ENCODE measurements at regions of chr11 and their contacts with region 1.

Region 1: GRCh38 chr11:116073854-116074837 is 569.9 kb upstream of the CADM1 start:
- DNase-seq: no peak
- H3K4me3 ChIP-seq: no peak overlapping the region
- H3K27ac ChIP-seq: no peak overlapping the region
- H3K4me1 ChIP-seq: peaks cover 0 to 9% (median 3%) of the 10 kb centered on the region in 4 experiments; a peak in 4 of 7 replicates
- H3K27me3 ChIP-seq: peaks cover 0 to 6% (median 0%) of the 10 kb centered on the region in 4 experiments; a peak in 1 of 7 replicates
- CTCF ChIP-seq: no peak
- EP300 ChIP-seq: no peak
- POLR2A ChIP-seq: no peak
- RAD21 ChIP-seq: no peak

Region 2: GRCh38 chr11:115889712-115890111 is 184.4 kb before region 1 on chr11:
- CTCF ChIA-PET with region 1: no interaction called
- POLR2A ChIA-PET with region 1: no interaction called
- DNase-seq: no peak
- H3K4me3 ChIP-seq: no peak overlapping the region
- H3K27ac ChIP-seq: no peak overlapping the region
- H3K4me1 ChIP-seq: peaks cover 0 to 3% (median 0%) of the 10 kb centered on the region in 4 experiments; a peak in 1 of 7 replicates
- H3K27me3 ChIP-seq: no peaks in the 10 kb centered on the region
- CTCF ChIP-seq: no peak
- EP300 ChIP-seq: no peak
- POLR2A ChIP-seq: no peak
- RAD21 ChIP-seq: no peak

Region 3: GRCh38 chr11:116035977-116036376 is 38.2 kb before region 1 on chr11:
- CTCF ChIA-PET with region 1: interaction called, 13 read pairs
- POLR2A ChIA-PET with region 1: no interaction called
- DNase-seq: no peak
- H3K4me3 ChIP-seq: no peak overlapping the region
- H3K27ac ChIP-seq: no peak overlapping the region
- H3K4me1 ChIP-seq: peaks cover 0 to 8% (median 3%) of the 10 kb centered on the region in 4 experiments; a peak in 5 of 7 replicates
- H3K27me3 ChIP-seq: no peaks in the 10 kb centered on the region
- CTCF ChIP-seq: no peak
- EP300 ChIP-seq: no peak
- POLR2A ChIP-seq: no peak
- RAD21 ChIP-seq: no peak

Region 4: DNA sequence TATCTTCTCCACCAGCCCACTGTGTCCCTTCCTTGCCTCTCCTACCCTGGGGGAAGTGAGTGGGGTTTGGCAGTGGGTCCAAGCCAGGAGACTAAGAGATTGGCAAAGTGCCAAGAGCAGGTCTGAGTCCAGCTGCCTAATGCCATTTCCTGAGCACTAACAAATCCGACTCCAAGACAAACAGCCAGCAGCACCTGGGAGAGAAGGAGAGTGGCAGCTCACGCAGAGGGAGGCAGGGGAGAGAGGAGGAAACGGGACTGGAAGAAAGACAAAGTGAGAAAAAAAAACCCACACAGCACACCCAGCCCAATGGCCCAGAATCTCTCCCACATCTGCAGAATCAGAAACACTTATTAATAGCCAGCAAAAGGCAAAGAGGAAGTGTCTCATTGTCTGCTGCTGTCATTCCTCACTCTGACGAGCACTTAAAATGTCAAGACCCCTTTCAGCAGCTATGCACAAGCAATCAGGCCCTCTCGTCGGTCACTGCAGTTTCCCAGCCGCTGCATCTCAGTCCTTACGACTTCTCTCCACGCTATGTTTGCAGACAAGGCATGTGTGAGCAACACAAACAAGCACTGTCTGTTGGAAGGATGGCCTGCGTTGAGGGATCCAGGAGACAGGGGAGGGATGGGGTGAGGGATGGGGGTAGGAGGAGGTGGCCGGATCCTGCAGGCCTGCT is 11.5 kb before region 1 on chr11:
- CTCF ChIA-PET with region 1: interaction called, 12 read pairs
- POLR2A ChIA-PET with region 1: no interaction called
- DNase-seq: no peak
- H3K4me3 ChIP-seq: no peak overlapping the region
- H3K27ac ChIP-seq: no peak overlapping the region
- H3K4me1 ChIP-seq: peaks cover 0 to 11% (median 5%) of the 10 kb centered on the region in 4 experiments; a peak in 4 of 7 replicates
- H3K27me3 ChIP-seq: peaks cover 0 to 7% (median 3%) of the 10 kb centered on the region in 4 experiments; a peak in 4 of 7 replicates
- CTCF ChIP-seq: no peak
- EP300 ChIP-seq: no peak
- POLR2A ChIP-seq: no peak
- RAD21 ChIP-seq: no peak

Region 5: GRCh38 chr11:116086426-116086825 is 12.3 kb after region 1 on chr11:
- CTCF ChIA-PET with region 1: interaction called, 15 read pairs
- POLR2A ChIA-PET with region 1: no interaction called
- DNase-seq: no peak
- H3K4me3 ChIP-seq: no peak overlapping the region
- H3K27ac ChIP-seq: no peak overlapping the region
- H3K4me1 ChIP-seq: peaks cover 0 to 9% (median 3%) of the 10 kb centered on the region in 4 experiments; a peak in 3 of 7 replicates
- H3K27me3 ChIP-seq: no peaks in the 10 kb centered on the region; a peak in 1 of 7 replicates
- CTCF ChIP-seq: no peak
- EP300 ChIP-seq: no peak
- POLR2A ChIP-seq: no peak
- RAD21 ChIP-seq: no peak

Region 6: DNA sequence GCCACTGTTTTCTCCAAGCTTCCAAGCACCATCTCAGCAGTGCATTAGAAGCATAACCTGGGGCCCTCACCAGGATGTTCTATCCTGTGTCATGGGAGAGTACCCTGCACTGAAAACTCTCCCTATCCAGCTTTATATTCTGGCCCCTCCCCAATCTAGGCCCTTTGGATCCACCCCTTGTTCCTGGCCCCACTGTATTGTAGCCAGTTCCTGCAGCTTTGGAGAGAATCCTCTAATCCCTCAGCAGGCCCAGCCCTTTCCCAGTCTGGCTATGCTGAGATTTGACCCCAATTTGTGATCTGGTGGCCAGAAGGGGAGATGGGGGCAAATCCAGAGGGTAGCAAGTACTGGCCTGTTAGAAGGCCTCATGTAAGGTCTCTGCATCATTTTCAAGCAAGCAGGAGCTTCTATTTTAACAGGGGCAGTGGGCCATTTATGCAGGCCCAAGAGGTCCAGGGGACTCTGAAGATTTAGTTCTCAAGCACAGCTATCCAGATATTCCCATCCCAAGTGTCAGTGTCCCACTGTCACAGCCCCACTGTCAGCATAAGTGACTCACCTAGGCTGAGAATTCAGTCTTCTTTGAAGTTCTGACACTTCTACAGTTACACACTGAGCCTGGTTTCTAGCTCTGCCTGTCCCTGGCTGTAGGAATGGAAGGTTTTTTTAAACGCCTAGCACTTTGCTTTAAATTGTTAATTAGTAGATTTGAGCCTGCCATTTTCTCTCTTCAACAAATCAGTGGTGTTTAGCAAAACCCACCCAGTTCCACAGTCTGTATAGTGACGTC is 19.5 kb after region 1 on chr11:
- CTCF ChIA-PET with region 1: interaction called, 10 read pairs
- POLR2A ChIA-PET with region 1: no interaction called
- DNase-seq: no peak
- H3K4me3 ChIP-seq: no peak overlapping the region
- H3K27ac ChIP-seq: no peak overlapping the region
- H3K4me1 ChIP-seq: peaks cover 0 to 3% (median 0%) of the 10 kb centered on the region in 4 experiments; a peak in 1 of 7 replicates
- H3K27me3 ChIP-seq: peaks cover 0 to 2% (median 1%) of the 10 kb centered on the region in 4 experiments; a peak in 2 of 7 replicates
- CTCF ChIP-seq: no peak
- EP300 ChIP-seq: no peak
- POLR2A ChIP-seq: no peak
- RAD21 ChIP-seq: no peak

Region 7: DNA sequence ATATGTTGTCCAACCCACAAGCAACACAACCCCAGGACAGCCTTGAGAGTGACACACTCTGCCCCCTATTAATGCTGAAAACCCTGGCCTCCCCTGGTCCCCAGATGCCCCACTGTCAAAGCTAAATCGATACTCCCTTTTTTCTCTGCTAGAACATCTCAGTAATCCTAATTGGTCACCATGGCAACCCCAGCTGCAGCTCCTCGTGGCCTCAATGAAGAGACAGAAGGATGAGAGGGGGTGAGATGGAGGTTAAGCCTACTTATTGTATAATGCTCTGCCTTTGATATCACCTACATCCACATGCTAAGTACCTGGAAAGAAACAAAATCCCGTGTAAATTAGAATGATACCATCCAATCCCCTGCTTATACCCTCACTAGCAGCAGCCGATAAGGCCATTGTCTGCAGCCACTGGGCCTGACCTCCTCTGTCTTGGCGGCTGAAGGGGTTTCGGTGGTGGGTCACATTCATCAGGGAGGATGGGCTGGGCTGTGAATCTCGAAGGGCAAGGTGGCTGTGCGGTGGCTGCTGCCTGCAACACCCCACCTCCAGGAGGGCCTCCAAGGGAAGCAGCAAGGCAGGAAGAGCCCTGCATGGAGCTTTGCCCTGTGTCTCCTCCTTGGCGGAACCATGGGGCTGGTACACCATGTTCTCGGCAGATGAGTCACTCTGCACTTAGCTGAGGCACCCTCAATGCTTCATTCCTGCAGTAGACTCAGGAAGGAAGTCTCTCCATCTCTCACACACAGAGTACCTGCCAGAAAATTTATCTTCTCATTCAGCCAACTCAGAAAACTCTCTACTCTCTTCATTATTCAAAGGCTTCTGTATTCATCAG is 299.2 kb after region 1 on chr11:
- CTCF ChIA-PET with region 1: no interaction called
- POLR2A ChIA-PET with region 1: no interaction called
- DNase-seq: no peak
- H3K4me3 ChIP-seq: no peak overlapping the region
- H3K27ac ChIP-seq: no peak overlapping the region
- H3K4me1 ChIP-seq: no peaks in the 10 kb centered on the region; a peak in 1 of 7 replicates
- H3K27me3 ChIP-seq: no peaks in the 10 kb centered on the region
- CTCF ChIP-seq: no peak
- EP300 ChIP-seq: no peak
- POLR2A ChIP-seq: no peak
- RAD21 ChIP-seq: no peak

Measured in H1 (cell line).